ENCODE measurements at regions of chr17 and their contacts with region 1.

Region 1: GRCh38 chr17:42773290-42774035 is at the start of gene VPS25:
- DNase-seq: peak; percentile 75 to 85 (median 81)
- ATAC-seq: peak; percentile 90 to 98 (median 97)
- H3K4me3 ChIP-seq: peak within 1 kb of the TSS; percentile 47 to 94 (median 84)
- H3K27ac ChIP-seq: peak within 1 kb of the TSS; percentile 20 to 86 (median 79)
- H3K4me1 ChIP-seq: peaks cover 0 to 18% (median 9%) of the 10 kb centered on the region in 12 donors
- H3K27me3 ChIP-seq: no peaks in the 10 kb centered on the region
- CTCF ChIP-seq: peak in 6 of 12 donors; percentile 24 to 51 (median 32)
- POLR2A ChIP-seq: peak in 1 of 2 donors; percentile 53
- total RNA-seq, gene VPS25: 32.7 to 50.4 (median 37.9) TPM

Region 2: GRCh38 chr17:42744806-42745617 is 28.5 kb before region 1 on chr17 and contains the start of gene EZH1:
- intact Hi-C with region 1: no loop called
- DNase-seq: peak; percentile 90 to 96 (median 92)
- ATAC-seq: peak; percentile 90 to 98 (median 98)
- H3K4me3 ChIP-seq: peak within 1 kb of the TSS; percentile 61 to 94 (median 80)
- H3K27ac ChIP-seq: peak within 1 kb of the TSS; percentile 83 to 99 (median 92)
- H3K4me1 ChIP-seq: peaks cover 7 to 50% (median 40%) of the 10 kb centered on the region in 12 donors
- H3K27me3 ChIP-seq: no peaks in the 10 kb centered on the region
- CTCF ChIP-seq: no peak
- POLR2A ChIP-seq: peak in 1 of 2 donors; percentile 83
- total RNA-seq, gene EZH1: 29.7 to 50.2 (median 41.5) TPM

Region 3: GRCh38 chr17:42819944-42820535 is 46.6 kb after region 1 on chr17:
- intact Hi-C with region 1: loop called in 2 of 10 experiments (anchors 5 to 10 kb)
- DNase-seq: peak; percentile 28 to 67 (median 44)
- ATAC-seq: no peak
- H3K4me3 ChIP-seq: no peak overlapping the region
- H3K27ac ChIP-seq: no peak overlapping the region
- H3K4me1 ChIP-seq: peaks cover 6 to 28% (median 16%) of the 10 kb centered on the region in 12 donors
- H3K27me3 ChIP-seq: no peaks in the 10 kb centered on the region
- CTCF ChIP-seq: peak; percentile 39 to 70 (median 62)
- POLR2A ChIP-seq: no peak